ENCODE measurements at regions of chr12 and their contacts with region 1.

Region 1: DNA sequence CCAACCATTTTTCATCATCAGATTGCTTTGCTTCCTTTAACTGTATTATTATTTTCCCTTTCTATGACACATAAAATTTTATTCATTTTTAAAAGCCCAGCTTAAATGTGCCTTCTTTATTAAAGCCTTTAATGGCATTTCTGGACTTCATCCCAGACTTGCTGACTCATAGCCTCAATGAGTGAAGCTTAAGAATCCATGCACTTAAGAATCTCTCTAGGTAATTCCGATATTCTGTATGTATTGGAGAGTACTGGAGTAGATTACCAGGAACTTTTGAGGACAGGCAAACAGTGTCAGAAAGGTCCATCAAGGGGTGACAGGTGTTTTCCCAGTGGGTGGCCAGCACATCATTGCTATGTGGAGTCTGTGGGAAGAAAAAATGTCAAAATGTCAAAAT is 107.9 kb downstream of the PTPRQ start:
- DNase-seq: peak; percentile 96
- H3K4me3 ChIP-seq: no peak overlapping the region
- H3K27ac ChIP-seq: peak overlapping the region; percentile 44
- H3K4me1 ChIP-seq: peaks cover 35% of the 10 kb centered on the region
- H3K27me3 ChIP-seq: no peaks in the 10 kb centered on the region
- CTCF ChIP-seq: no peak

Region 2: GRCh38 chr12:80580254-80580653 is 28.4 kb after region 1 on chr12:
- CTCF ChIA-PET with region 1: no interaction called
- POLR2A ChIA-PET with region 1: no interaction called
- intact Hi-C with region 1: loop called (anchors 1 kb)
- DNase-seq: peak; percentile 89
- H3K4me3 ChIP-seq: no peak overlapping the region
- H3K27ac ChIP-seq: peak overlapping the region; percentile 87
- H3K4me1 ChIP-seq: peaks cover 39% of the 10 kb centered on the region
- H3K27me3 ChIP-seq: no peaks in the 10 kb centered on the region
- CTCF ChIP-seq: no peak

Region 3: DNA sequence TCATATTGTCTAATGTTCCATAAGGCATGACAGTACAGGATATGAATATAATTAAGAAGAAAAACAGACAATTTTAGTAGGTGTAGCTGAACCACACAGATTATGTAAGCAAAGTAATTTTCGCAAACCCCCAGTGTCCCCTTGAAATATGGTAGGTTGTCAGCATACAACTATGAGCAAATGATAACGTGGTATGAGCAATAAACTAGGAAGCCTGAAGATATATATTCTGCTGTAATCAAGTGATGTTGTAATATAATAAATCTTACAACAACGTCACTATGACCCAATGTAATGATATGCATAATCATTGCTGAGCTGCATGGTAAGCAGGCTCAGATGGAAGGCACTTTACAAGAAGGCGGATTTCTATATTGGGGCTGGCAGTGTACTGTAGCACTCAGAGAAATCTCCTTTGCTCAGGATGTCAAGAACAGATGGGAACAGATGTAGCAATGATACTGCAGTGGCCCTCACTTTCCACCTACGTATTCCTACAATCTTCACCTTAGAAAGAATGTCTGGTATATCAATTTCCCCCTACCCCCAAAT is 107.7 kb after region 1 on chr12:
- CTCF ChIA-PET with region 1: no interaction called
- POLR2A ChIA-PET with region 1: no interaction called
- intact Hi-C with region 1: no loop called
- DNase-seq: no peak
- H3K4me3 ChIP-seq: no peak overlapping the region
- H3K27ac ChIP-seq: no peak overlapping the region
- H3K4me1 ChIP-seq: peaks cover 12% of the 10 kb centered on the region
- H3K27me3 ChIP-seq: no peaks in the 10 kb centered on the region
- CTCF ChIP-seq: no peak